Right ventricle myocardium superior (tissue), 1 donor: ENCODE measurements at regions of chr12 and their contacts with region 1.

Region 1: DNA sequence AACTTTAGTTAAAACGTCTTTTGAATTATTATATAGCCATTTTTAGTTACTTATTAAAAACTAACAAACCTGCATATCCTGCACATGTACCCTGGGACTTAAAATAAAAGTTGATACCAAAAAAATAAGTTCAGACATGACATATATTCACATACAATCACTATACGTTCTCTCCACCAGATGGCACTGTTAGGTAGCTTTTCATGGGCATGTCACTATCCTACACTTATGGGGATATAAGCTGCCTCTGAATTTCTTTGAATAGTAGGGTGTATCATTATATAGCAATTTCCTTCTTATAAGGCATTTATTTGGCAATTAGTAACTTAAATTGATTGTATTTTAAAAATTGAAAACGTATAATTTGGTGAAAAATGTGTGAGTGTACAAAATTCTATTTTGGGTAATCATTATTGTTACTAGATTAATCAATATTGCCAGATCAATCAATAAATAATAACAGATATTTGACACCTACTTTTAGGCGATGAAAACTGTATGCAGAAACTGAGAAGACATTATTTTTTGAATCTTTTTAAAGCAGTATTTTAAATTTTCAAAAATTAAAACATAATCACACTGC is 31.8 kb upstream of the OR10A7 start:
- DNase-seq: no peak
- ATAC-seq: peak; percentile 77

Region 2: GRCh38 chr12:55619354-55620138 is 430.5 kb after region 1 on chr12:
- intact Hi-C with region 1: loop called (anchors 5 kb)
- DNase-seq: no peak
- ATAC-seq: peak; percentile 95

Region 3: DNA sequence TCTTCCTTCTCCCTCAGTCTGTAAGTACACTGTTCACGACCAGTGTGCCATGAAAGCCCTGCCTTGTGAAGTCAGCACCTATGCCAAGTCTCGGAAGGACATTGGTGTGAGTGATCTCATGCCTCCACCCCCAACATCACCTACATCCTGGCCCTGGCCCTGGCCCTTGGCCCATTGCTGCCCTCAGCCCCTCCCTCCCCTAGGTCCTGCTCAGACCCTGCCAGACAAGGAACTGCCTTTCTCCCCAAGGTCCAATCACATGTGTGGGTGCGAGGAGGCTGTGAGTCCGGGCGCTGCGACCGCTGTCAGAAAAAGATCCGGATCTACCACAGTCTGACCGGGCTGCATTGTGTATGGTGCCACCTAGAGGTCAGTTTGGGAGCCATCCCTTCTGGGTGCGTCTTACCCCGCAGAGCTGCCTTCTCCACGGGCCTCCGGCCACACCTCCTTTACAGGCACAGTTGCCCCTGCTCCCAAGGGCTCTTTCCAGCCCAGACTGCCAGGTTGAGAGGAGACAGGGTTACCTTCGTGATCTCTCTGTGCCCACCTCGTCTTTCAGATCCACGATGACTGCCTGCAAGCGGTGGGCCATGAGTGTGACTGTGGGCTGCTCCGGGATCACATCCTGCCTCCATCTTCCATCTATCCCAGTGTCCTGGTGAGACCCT is 751.1 kb after region 1 on chr12:
- intact Hi-C with region 1: no loop called
- DNase-seq: peak; percentile 87
- ATAC-seq: peak; percentile 97